AG04450 (cell line): ENCODE measurements at regions of chr7 and their contacts with region 1.

Region 1: GRCh38 chr7:22082886-22083703 is 137.4 kb upstream of the CDCA7L start:
- DNase-seq: peak; percentile 44
- H3K4me3 ChIP-seq: peak overlapping the region; percentile 86
- H3K27ac ChIP-seq: peak overlapping the region; percentile 75
- H3K27me3 ChIP-seq: peaks cover 8% of the 10 kb centered on the region
- CTCF ChIP-seq: peak; percentile 92

Region 2: GRCh38 chr7:21898265-21898930 is 184.7 kb before region 1 on chr7:
- CTCF ChIA-PET with region 1: no interaction called
- POLR2A ChIA-PET with region 1: no interaction called
- DNase-seq: no peak
- H3K4me3 ChIP-seq: no peak overlapping the region
- H3K27ac ChIP-seq: no peak overlapping the region
- H3K27me3 ChIP-seq: no peaks in the 10 kb centered on the region
- CTCF ChIP-seq: no peak

Region 3: GRCh38 chr7:22094413-22095342 is 11.6 kb after region 1 on chr7:
- CTCF ChIA-PET with region 1: interaction called, 22 read pairs
- POLR2A ChIA-PET with region 1: interaction called, 4 read pairs
- DNase-seq: peak; percentile 11
- H3K4me3 ChIP-seq: no peak overlapping the region
- H3K27ac ChIP-seq: no peak overlapping the region
- H3K27me3 ChIP-seq: peaks cover 15% of the 10 kb centered on the region
- CTCF ChIP-seq: 0 out of 2 replicates have a peak, but pooled peaks have one; percentile 15